Activated CD8-positive, alpha-beta T cell treated with anti-CD3 and anti-CD28 coated beads for 36 hours (primary cell): ENCODE measurements at regions of chr5 and their contacts with region 1.

Region 1: GRCh38 chr5:87069974-87070624 is 197.6 kb upstream of the RASA1 start:
- DNase-seq: peak; percentile 41
- ATAC-seq: no peak
- H3K4me3 Mint-ChIP-seq: no peak overlapping the region
- H3K27ac Mint-ChIP-seq: no peak overlapping the region
- H3K4me1 Mint-ChIP-seq: peaks cover 22% of the 10 kb centered on the region
- H3K27me3 Mint-ChIP-seq: no peaks in the 10 kb centered on the region
- CTCF ChIP-seq: no peak

Region 2: GRCh38 chr5:86964889-86965288 is 105.2 kb before region 1 on chr5:
- CTCF ChIA-PET with region 1: no interaction called
- POLR2A ChIA-PET with region 1: no interaction called
- intact Hi-C with region 1: no loop called
- DNase-seq: no peak
- ATAC-seq: no peak
- H3K4me3 Mint-ChIP-seq: no peak overlapping the region
- H3K27ac Mint-ChIP-seq: no peak overlapping the region
- H3K4me1 Mint-ChIP-seq: no peaks in the 10 kb centered on the region
- H3K27me3 Mint-ChIP-seq: peaks cover 1% of the 10 kb centered on the region
- CTCF ChIP-seq: no peak

Region 3: GRCh38 chr5:87105577-87105976 is 35.5 kb after region 1 on chr5:
- CTCF ChIA-PET with region 1: no interaction called
- POLR2A ChIA-PET with region 1: no interaction called
- intact Hi-C with region 1: no loop called
- DNase-seq: no peak
- ATAC-seq: no peak
- H3K4me3 Mint-ChIP-seq: no peak overlapping the region
- H3K27ac Mint-ChIP-seq: no peak overlapping the region
- H3K4me1 Mint-ChIP-seq: peaks cover 25% of the 10 kb centered on the region
- H3K27me3 Mint-ChIP-seq: no peaks in the 10 kb centered on the region
- CTCF ChIP-seq: no peak

Region 4: DNA sequence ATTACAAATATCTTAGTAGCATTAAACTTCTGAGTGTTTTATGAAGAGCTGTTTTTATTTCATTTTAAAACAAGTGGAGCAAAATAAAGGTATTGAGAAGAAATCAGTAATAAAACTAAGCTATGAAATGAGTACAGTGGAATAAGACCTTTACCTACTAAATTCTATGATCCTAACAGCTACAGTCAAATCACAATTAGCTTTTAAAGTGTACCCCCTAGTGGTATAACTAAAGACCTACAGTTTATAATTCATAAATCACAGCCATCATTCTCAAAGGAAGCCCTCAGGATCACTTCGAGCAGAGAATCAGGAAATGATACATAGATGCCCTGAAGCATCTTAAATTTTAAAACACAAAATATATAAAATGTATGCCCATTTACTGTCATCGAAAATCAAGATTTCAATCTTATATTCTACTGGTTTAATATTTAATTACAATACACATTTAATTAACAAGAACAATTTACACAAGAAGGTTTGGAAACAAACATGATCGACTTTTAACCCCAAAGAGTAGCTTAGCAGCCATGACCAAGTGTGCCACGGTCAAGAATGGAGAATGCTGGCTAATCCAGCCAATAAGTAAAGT is 330.3 kb after region 1 on chr5:
- CTCF ChIA-PET with region 1: interaction called, 11 read pairs
- POLR2A ChIA-PET with region 1: no interaction called
- intact Hi-C with region 1: no loop called
- DNase-seq: no peak
- ATAC-seq: peak; percentile 86
- H3K4me3 Mint-ChIP-seq: no peak overlapping the region
- H3K27ac Mint-ChIP-seq: no peak overlapping the region
- H3K4me1 Mint-ChIP-seq: peaks cover 34% of the 10 kb centered on the region
- H3K27me3 Mint-ChIP-seq: no peaks in the 10 kb centered on the region
- CTCF ChIP-seq: peak; percentile 72